H1 (cell line): ENCODE measurements at regions of chr7 and their contacts with region 1.

Region 1: DNA sequence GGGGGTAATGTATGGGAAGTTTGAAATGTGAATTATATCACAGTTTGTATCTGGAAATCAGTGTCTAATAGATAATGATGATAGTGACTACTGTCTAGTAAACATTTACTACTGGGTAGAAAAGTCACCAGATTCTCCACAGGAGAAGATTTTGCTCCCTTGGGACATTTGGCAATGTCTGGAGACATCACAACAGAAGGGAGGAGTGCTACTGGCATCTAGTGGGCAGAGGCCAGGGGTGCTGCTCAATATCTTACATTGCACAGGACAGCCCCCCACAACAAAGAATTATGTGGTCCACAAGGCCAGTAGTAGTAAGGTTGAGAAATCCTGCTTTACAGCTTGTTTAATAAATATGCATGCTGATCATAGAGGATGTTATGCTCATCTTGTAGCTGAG is 92.3 kb upstream of the PRPS1L1 start:
- DNase-seq: no peak
- H3K4me3 ChIP-seq: no peak overlapping the region
- H3K27ac ChIP-seq: no peak overlapping the region
- H3K4me1 ChIP-seq: no peaks in the 10 kb centered on the region; a peak in 1 of 7 replicates
- H3K27me3 ChIP-seq: no peaks in the 10 kb centered on the region
- CTCF ChIP-seq: peak; percentile 57 to 64 (median 61)
- EP300 ChIP-seq: no peak
- POLR2A ChIP-seq: no peak
- RAD21 ChIP-seq: peak; percentile 83 to 87

Region 2: GRCh38 chr7:18109762-18110161 is 10.2 kb before region 1 on chr7:
- CTCF ChIA-PET with region 1: interaction called, 12 read pairs
- POLR2A ChIA-PET with region 1: no interaction called
- DNase-seq: no peak
- H3K4me3 ChIP-seq: no peak overlapping the region
- H3K27ac ChIP-seq: no peak overlapping the region
- H3K4me1 ChIP-seq: no peaks in the 10 kb centered on the region
- H3K27me3 ChIP-seq: no peaks in the 10 kb centered on the region
- CTCF ChIP-seq: no peak
- EP300 ChIP-seq: no peak
- POLR2A ChIP-seq: no peak
- RAD21 ChIP-seq: no peak

Region 3: DNA sequence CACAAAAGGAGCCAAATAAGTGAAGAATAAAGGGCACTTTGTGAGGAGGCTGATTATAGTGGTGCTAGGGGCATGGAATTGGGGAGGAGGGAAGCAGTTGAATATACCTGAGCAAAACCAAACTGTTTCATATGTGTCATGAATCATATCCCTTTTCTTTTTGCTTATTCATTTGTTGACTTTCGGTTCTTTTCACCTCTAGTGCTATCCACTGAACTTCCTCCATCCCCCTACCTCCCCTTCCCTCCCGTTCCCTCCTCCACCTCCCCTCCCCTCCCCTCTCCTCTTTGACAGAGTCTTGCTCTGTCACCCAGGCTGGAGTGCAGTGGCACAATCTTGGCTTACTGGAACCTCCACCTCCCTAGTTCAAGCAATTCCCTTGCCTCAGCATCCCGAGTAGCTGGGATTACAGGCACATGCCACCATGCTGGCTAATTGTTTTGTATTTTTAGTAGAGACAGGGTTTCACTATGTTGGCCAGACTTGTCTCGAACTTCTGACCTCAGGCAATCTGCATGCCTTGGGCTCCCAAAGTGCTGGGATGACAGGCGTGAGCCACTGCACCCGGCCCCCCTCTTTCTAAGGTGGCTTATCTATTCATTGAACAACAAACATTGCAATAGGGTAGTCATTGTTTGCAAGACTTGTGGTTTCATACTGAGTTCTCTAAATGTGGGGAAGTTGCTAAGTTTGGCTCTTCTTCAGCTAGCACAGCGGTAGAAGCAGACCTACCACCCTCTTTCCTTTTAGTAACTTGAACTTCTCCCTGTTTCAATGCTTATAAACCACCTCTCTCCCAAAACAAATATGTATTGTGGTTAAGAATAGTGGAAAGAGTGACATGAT is 58.1 kb after region 1 on chr7:
- CTCF ChIA-PET with region 1: no interaction called
- POLR2A ChIA-PET with region 1: no interaction called
- DNase-seq: no peak
- H3K4me3 ChIP-seq: no peak overlapping the region
- H3K27ac ChIP-seq: no peak overlapping the region
- H3K4me1 ChIP-seq: no peaks in the 10 kb centered on the region
- H3K27me3 ChIP-seq: no peaks in the 10 kb centered on the region
- CTCF ChIP-seq: no peak
- EP300 ChIP-seq: no peak
- POLR2A ChIP-seq: no peak
- RAD21 ChIP-seq: no peak